ENCODE measurements at regions of chr10 and their contacts with region 1.

Region 1: DNA sequence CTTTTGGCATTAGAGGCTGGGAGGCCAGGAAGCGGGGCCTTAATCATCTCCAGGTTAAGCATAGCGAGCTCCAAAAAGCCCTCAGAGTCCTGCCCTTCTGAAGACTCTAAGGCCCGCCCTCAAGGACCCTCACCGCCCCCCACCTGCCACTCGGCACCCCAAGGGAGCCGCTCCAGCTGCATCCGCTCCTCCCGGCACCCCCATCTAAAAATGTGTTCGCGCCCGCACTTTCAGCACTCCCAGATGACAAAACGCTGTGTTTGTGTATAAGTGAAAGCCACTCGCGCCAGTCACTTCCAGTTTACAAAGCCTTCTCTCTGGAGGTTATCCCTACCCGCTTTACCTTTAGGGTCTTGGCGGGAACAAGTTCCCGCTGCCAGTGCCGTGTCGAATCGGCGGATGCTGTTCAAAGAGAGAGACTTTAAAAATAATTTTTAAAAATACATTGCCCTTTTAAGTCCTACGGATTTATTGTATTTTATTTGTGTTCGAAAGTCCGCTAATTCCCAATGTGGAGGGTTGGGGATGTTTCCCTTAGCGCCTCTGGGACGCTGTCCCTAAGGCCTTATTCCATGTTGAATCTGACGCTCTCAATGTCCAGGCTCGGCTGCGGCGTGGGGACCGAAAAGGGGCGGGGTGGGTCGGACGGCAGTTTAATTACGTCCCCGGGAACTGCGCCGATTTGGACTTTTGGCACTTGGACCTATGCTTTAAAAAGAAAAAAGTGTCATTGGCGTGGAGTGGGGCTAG is at the starts of genes DCLRE1A and NHLRC2:
- DNase-seq: peak; percentile 81 to 90 (median 86)
- ATAC-seq: peak; percentile 72 to 88 (median 86)
- H3K4me3 ChIP-seq: peak within 1 kb of the TSS; percentile 63 to 97 (median 88)
- H3K27ac ChIP-seq: peak within 1 kb of the TSS; percentile 79 to 98 (median 95)
- H3K4me1 ChIP-seq: peaks cover 0 to 59% (median 42%) of the 10 kb centered on the region in 12 donors
- H3K27me3 ChIP-seq: no peaks in the 10 kb centered on the region
- CTCF ChIP-seq: no peak
- POLR2A ChIP-seq: peak in 1 of 2 donors; percentile 33
- total RNA-seq, gene DCLRE1A: 5.1 to 8.5 (median 6.3) TPM
- total RNA-seq, gene NHLRC2: 50.2 to 105 (median 78.3) TPM

Region 2: DNA sequence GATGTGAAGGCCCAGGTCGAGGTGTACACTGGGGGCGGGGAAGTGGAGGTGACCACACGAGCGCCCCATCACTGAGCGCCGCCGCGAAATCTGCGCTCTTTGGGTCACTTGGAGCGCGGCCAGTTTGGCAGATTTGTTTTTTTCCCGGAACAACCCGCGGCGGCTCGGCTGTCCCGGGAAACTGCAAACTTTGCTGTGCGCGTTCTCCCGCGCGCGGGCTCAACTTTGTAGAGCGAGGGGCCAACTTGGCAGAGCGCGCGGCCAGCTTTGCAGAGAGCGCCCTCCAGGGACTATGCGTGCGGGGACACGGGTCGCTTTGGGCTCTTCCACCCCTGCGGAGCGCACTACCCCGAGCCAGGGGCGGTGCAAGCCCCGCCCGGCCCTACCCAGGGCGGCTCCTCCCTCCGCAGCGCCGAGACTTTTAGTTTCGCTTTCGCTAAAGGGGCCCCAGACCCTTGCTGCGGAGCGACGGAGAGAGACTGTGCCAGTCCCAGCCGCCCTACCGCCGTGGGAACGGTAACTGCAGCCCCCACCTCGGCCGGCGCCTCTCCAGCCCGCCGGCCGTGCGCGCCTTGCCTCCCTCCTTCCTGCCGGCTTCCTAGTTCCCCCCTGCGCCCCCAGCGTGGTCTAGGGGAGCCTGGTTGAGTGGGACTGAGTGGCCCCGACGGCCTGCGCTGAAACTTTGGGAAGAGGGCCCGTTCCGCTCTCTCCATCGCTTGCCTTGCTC is 174.6 kb before region 1 on chr10 and contains the start of gene CASP7:
- intact Hi-C with region 1: loop called in 1 of 10 experiments (anchors 10 kb)
- DNase-seq: peak; percentile 80 to 91 (median 87)
- ATAC-seq: peak; percentile 96 to 97 (median 96)
- H3K4me3 ChIP-seq: peak within 1 kb of the TSS; percentile 75 to 97 (median 86)
- H3K27ac ChIP-seq: peak within 1 kb of the TSS; percentile 88 to 98 (median 94)
- H3K4me1 ChIP-seq: peaks cover 0 to 22% (median 13%) of the 10 kb centered on the region in 12 donors
- H3K27me3 ChIP-seq: no peaks in the 10 kb centered on the region
- CTCF ChIP-seq: peak in 2 of 12 donors; percentile 10 to 33
- POLR2A ChIP-seq: peak in 1 of 2 donors; percentile 58
- total RNA-seq, gene CASP7: 5.5 to 32.7 (median 10.4) TPM

Region 3: GRCh38 chr10:113891476-113891875 is 37.3 kb after region 1 on chr10:
- intact Hi-C with region 1: loop called in 2 of 10 experiments (anchors 5 kb)
- DNase-seq: peak in 1 of 5 donors; percentile 13
- ATAC-seq: peak; percentile 82 to 94 (median 87)
- H3K4me3 ChIP-seq: no peak overlapping the region
- H3K27ac ChIP-seq: peak overlapping the region in 9 of 12 donors; percentile 12 to 70 (median 32)
- H3K4me1 ChIP-seq: peaks cover 0 to 52% (median 9%) of the 10 kb centered on the region in 12 donors
- H3K27me3 ChIP-seq: no peaks in the 10 kb centered on the region
- CTCF ChIP-seq: peak in 5 of 12 donors; percentile 16 to 31 (median 21)
- POLR2A ChIP-seq: no peak

Region 4: GRCh38 chr10:114068054-114068707 is 214.0 kb after region 1 on chr10:
- intact Hi-C with region 1: loop called in 2 of 10 experiments (anchors 5 to 10 kb)
- DNase-seq: peak in 1 of 5 donors; percentile 39
- ATAC-seq: no peak
- H3K4me3 ChIP-seq: no peak overlapping the region
- H3K27ac ChIP-seq: peak overlapping the region in 11 of 12 donors; percentile 28 to 87 (median 78)
- H3K4me1 ChIP-seq: peaks cover 0 to 49% (median 29%) of the 10 kb centered on the region in 12 donors
- H3K27me3 ChIP-seq: no peaks in the 10 kb centered on the region
- CTCF ChIP-seq: no peak
- POLR2A ChIP-seq: no peak

Measured in heart left ventricle (tissue), 16 donors.